HCT116 (cell line): ENCODE measurements at regions of chr7 and their contacts with region 1.

Region 1: DNA sequence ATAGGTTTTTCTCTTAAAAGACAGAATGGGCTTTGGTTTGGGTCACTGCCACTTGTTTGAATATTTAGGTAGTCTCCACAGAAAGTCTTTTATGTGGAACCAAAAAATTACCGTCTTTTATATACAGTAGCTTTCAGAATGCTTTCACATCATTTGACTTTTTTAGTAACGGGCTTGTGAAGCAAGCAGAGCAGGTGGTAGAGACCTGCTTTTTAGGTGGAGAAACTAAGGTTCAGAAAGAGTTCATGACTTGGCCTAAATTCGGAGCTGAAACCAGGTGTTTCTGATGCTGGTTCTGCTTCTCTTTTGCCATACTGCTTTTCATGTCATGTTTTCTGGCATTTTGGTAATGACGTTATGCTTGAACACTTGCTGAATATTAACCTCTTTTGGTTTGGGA is 36.3 kb downstream of the GARS1 start:
- DNase-seq: no peak
- ATAC-seq: no peak
- H3K4me3 ChIP-seq: no peak overlapping the region
- H3K27ac ChIP-seq: no peak overlapping the region
- H3K4me1 ChIP-seq: no peaks in the 10 kb centered on the region
- H3K27me3 ChIP-seq: no peaks in the 10 kb centered on the region
- CTCF ChIP-seq: no peak
- POLR2A ChIP-seq: no peak
- RAD21 ChIP-seq: no peak

Region 2: GRCh38 chr7:30616318-30616717 is 14.7 kb before region 1 on chr7:
- CTCF ChIA-PET with region 1: no interaction called
- POLR2A ChIA-PET with region 1: interaction called, 3 read pairs
- RAD21 ChIA-PET with region 1: no interaction called
- intact Hi-C with region 1: loop called (anchors 2 kb)
- DNase-seq: no peak
- ATAC-seq: no peak
- H3K4me3 ChIP-seq: no peak overlapping the region
- H3K27ac ChIP-seq: no peak overlapping the region
- H3K4me1 ChIP-seq: no peaks in the 10 kb centered on the region
- H3K27me3 ChIP-seq: no peaks in the 10 kb centered on the region
- CTCF ChIP-seq: no peak
- POLR2A ChIP-seq: no peak
- RAD21 ChIP-seq: no peak

Region 3: GRCh38 chr7:30644286-30644955 is 13.4 kb after region 1 on chr7:
- CTCF ChIA-PET with region 1: no interaction called
- POLR2A ChIA-PET with region 1: no interaction called
- RAD21 ChIA-PET with region 1: no interaction called
- intact Hi-C with region 1: loop called (anchors 1 kb)
- DNase-seq: no peak
- ATAC-seq: no peak
- H3K4me3 ChIP-seq: no peak overlapping the region
- H3K27ac ChIP-seq: no peak overlapping the region
- H3K4me1 ChIP-seq: no peaks in the 10 kb centered on the region
- H3K27me3 ChIP-seq: no peaks in the 10 kb centered on the region
- CTCF ChIP-seq: no peak
- POLR2A ChIP-seq: no peak
- RAD21 ChIP-seq: no peak